ENCODE measurements at regions of chr21 and their contacts with region 1.

Region 1: DNA sequence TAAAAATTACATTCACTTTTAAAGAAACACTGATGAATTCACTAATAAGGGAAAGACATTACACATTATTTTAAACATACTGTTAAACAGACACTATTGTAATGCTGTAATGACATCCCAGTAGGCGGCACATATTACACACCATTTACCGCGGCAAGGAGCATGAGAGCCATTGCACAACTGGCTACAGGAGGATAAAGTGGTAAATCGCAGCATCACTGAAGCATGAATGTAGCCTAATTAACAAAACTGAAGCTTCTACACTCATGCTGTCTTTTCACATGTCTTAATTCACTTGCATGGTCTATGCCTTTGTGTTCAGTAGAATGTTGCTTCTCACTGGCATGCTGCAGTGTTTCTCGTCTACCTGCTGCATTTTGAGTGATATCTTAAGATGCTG is 1046.0 kb downstream of the MRPL39 start:
- DNase-seq: no peak
- ATAC-seq: no peak

Region 2: GRCh38 chr21:24509131-24509530 is 52.2 kb before region 1 on chr21:
- intact Hi-C with region 1: loop called (anchors 10 kb)
- DNase-seq: no peak
- ATAC-seq: no peak